ENCODE measurements at regions of chr4 and their contacts with region 1.

Region 1: GRCh38 chr4:112231779-112232713 is at the start of gene AP1AR:
- DNase-seq: peak; percentile 61 to 87 (median 71)
- ATAC-seq: peak; percentile 73
- H3K4me3 ChIP-seq: peak within 1 kb of the TSS; percentile 71
- H3K4me3 Mint-ChIP-seq: peak within 1 kb of the TSS; percentile 86 to 99 (median 96)
- H3K27ac ChIP-seq: peak within 1 kb of the TSS; percentile 85
- H3K27ac Mint-ChIP-seq: peak within 1 kb of the TSS; percentile 91 to 100 (median 99)
- H3K4me1 ChIP-seq: peaks cover 3 to 12% of the 10 kb centered on the region in 2 donors
- H3K4me1 Mint-ChIP-seq: peaks cover 19 to 50% (median 33%) of the 10 kb centered on the region in 7 donors
- H3K27me3 ChIP-seq: no peaks in the 10 kb centered on the region
- H3K27me3 Mint-ChIP-seq: peaks cover under 1 to 4% (median 1%) of the 10 kb centered on the region in 5 donors
- total RNA-seq, gene AP1AR: 7.3 to 21.0 (median 17.0) TPM

Region 2: GRCh38 chr4:112109186-112110058 is 122.6 kb before region 1 on chr4:
- CTCF ChIA-PET with region 1: no interaction called
- POLR2A ChIA-PET with region 1: no interaction called
- intact Hi-C with region 1: loop called in 1 of 2 experiments (anchors 2 kb)
- DNase-seq: no peak
- ATAC-seq: peak; percentile 54
- H3K4me3 ChIP-seq: no peak overlapping the region
- H3K4me3 Mint-ChIP-seq: peak overlapping the region in 1 of 10 donors; percentile 67
- H3K27ac ChIP-seq: no peak overlapping the region
- H3K27ac Mint-ChIP-seq: peak overlapping the region in 2 of 9 donors; percentile 28 to 81
- H3K4me1 ChIP-seq: no peaks in the 10 kb centered on the region
- H3K4me1 Mint-ChIP-seq: peaks cover 0 to 13% (median 3%) of the 10 kb centered on the region in 7 donors
- H3K27me3 ChIP-seq: no peaks in the 10 kb centered on the region
- H3K27me3 Mint-ChIP-seq: no peaks in the 10 kb centered on the region

Region 3: DNA sequence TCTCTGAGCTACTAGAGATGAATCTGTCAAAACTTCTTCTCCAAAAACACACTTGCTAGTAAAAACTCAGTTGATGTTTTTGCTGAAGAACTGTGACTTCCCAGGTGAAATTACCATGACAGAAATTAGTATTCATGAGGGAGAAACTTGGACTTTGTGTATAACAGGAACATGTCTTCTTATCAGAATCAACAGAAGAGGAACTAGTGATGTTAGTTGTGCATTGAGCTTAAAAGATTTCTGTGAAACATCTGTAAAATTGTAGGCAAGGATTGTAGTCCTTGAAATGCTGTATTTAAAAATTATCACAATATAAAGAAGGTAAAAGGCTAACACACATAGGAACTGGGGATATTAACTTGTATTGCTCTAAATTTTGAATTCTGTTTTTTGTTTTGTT is 75.5 kb before region 1 on chr4:
- CTCF ChIA-PET with region 1: no interaction called
- POLR2A ChIA-PET with region 1: no interaction called
- intact Hi-C with region 1: no loop called
- DNase-seq: no peak
- ATAC-seq: no peak
- H3K4me3 ChIP-seq: no peak overlapping the region
- H3K4me3 Mint-ChIP-seq: no peak overlapping the region
- H3K27ac ChIP-seq: no peak overlapping the region
- H3K27ac Mint-ChIP-seq: no peak overlapping the region
- H3K4me1 ChIP-seq: peaks cover 0 to 15% of the 10 kb centered on the region in 2 donors
- H3K4me1 Mint-ChIP-seq: peaks cover 14 to 37% (median 27%) of the 10 kb centered on the region in 7 donors
- H3K27me3 ChIP-seq: no peaks in the 10 kb centered on the region
- H3K27me3 Mint-ChIP-seq: no peaks in the 10 kb centered on the region

Region 4: DNA sequence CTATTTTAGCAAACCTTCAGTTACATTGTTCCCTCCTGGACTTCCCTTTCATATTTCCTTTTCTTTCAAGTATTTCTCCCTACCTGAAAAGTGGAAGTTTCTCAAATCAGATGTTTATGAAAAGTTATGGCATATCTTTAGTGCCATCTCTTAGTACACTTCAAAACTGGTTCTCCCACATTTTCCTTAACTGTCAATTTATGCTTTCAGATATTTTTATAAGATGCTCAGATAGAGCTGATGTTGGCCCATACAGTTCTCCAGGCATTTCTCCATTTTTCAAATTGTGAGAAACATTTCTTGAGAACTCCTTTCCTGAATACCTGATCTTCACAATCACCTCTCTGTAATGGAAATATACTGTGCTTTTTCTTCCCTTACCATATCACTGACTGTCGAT is 33.0 kb before region 1 on chr4:
- CTCF ChIA-PET with region 1: no interaction called
- POLR2A ChIA-PET with region 1: no interaction called
- intact Hi-C with region 1: loop called in 1 of 2 experiments (anchors 5 kb)
- DNase-seq: no peak
- ATAC-seq: no peak
- H3K4me3 ChIP-seq: no peak overlapping the region
- H3K4me3 Mint-ChIP-seq: no peak overlapping the region
- H3K27ac ChIP-seq: no peak overlapping the region
- H3K27ac Mint-ChIP-seq: no peak overlapping the region
- H3K4me1 ChIP-seq: no peaks in the 10 kb centered on the region
- H3K4me1 Mint-ChIP-seq: peaks cover 0 to 15% (median 0%) of the 10 kb centered on the region in 7 donors
- H3K27me3 ChIP-seq: no peaks in the 10 kb centered on the region
- H3K27me3 Mint-ChIP-seq: no peaks in the 10 kb centered on the region

Region 5: DNA sequence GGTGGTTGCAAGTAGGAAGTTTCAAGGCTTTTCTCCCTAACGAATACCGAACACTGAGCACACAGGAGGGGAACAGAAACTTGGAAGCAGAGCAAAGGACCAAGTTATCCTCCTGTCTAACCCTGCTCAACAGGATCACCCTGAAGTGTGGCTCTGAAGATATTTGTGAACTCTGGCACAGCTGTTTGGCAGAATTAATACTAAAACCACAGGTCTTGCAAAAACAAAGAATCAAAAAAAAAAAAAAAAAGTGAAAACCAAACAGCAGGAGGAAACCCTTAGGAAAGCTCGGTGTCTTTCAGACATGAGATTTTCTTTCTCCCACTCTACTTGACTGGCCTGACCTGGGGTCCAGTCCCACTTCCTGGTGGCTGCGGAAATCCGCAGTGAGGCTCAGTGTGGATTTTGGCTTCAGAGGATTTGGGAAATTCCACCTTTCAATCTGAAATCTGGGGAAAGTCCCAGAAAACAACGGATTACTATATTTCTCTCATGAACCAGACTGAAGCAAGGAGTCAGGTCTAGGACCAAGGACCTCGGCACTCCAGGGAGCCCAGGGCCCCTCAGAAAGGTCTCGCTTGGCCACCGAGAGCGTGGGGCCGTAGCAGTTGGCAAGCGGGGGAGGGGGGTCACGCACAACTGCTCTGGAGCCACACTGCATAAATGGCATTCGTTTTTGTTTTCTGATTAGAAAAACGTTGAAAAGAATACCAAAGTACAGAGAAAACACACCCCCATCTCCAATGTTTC is 52.8 kb after region 1 on chr4:
- CTCF ChIA-PET with region 1: no interaction called
- POLR2A ChIA-PET with region 1: interaction called, 27 read pairs
- intact Hi-C with region 1: loop called (anchors 1 kb)
- DNase-seq: no peak
- ATAC-seq: no peak
- H3K4me3 ChIP-seq: peak overlapping the region; percentile 94
- H3K4me3 Mint-ChIP-seq: peak overlapping the region; percentile 87 to 97 (median 92)
- H3K27ac ChIP-seq: peak overlapping the region; percentile 81
- H3K27ac Mint-ChIP-seq: peak overlapping the region; percentile 81 to 95 (median 91)
- H3K4me1 ChIP-seq: peaks cover 31 to 54% of the 10 kb centered on the region in 2 donors
- H3K4me1 Mint-ChIP-seq: peaks cover 47 to 88% (median 83%) of the 10 kb centered on the region in 7 donors
- H3K27me3 ChIP-seq: no peaks in the 10 kb centered on the region
- H3K27me3 Mint-ChIP-seq: no peaks in the 10 kb centered on the region

Region 6: GRCh38 chr4:112523764-112524505 is 291.9 kb after region 1 on chr4:
- CTCF ChIA-PET with region 1: interaction called, 5 read pairs
- POLR2A ChIA-PET with region 1: no interaction called
- intact Hi-C with region 1: loop called in 1 of 2 experiments (anchors 1 kb)
- DNase-seq: peak; percentile 52 to 83 (median 71)
- ATAC-seq: peak; percentile 90
- H3K4me3 ChIP-seq: peak overlapping the region; percentile 69
- H3K4me3 Mint-ChIP-seq: peak overlapping the region; percentile 82 to 96 (median 90)
- H3K27ac ChIP-seq: no peak overlapping the region
- H3K27ac Mint-ChIP-seq: peak overlapping the region in 2 of 9 donors; percentile 11 to 62
- H3K4me1 ChIP-seq: peaks cover 7 to 22% of the 10 kb centered on the region in 2 donors
- H3K4me1 Mint-ChIP-seq: peaks cover 15 to 44% (median 33%) of the 10 kb centered on the region in 7 donors
- H3K27me3 ChIP-seq: peaks cover 16 to 40% of the 10 kb centered on the region in 2 donors
- H3K27me3 Mint-ChIP-seq: peaks cover 52 to 84% (median 63%) of the 10 kb centered on the region in 5 donors

Region 7: GRCh38 chr4:113212613-113213012 is 980.6 kb after region 1 on chr4:
- CTCF ChIA-PET with region 1: no interaction called
- POLR2A ChIA-PET with region 1: no interaction called
- intact Hi-C with region 1: no loop called
- DNase-seq: no peak
- ATAC-seq: no peak
- H3K4me3 ChIP-seq: no peak overlapping the region
- H3K4me3 Mint-ChIP-seq: no peak overlapping the region
- H3K27ac ChIP-seq: no peak overlapping the region
- H3K27ac Mint-ChIP-seq: no peak overlapping the region
- H3K4me1 ChIP-seq: no peaks in the 10 kb centered on the region
- H3K4me1 Mint-ChIP-seq: no peaks in the 10 kb centered on the region
- H3K27me3 ChIP-seq: no peaks in the 10 kb centered on the region
- H3K27me3 Mint-ChIP-seq: peaks cover 0 to 8% (median 0%) of the 10 kb centered on the region in 5 donors